ENCODE measurements at regions of chr7 and their contacts with region 1.

Region 1: GRCh38 chr7:139254281-139254680 is 23.2 kb downstream of the UBN2 start:
- DNase-seq: no peak
- H3K4me3 ChIP-seq: no peak overlapping the region
- H3K27ac ChIP-seq: no peak overlapping the region
- H3K4me1 ChIP-seq: no peaks in the 10 kb centered on the region
- H3K27me3 ChIP-seq: no peaks in the 10 kb centered on the region
- CTCF ChIP-seq: no peak

Region 2: DNA sequence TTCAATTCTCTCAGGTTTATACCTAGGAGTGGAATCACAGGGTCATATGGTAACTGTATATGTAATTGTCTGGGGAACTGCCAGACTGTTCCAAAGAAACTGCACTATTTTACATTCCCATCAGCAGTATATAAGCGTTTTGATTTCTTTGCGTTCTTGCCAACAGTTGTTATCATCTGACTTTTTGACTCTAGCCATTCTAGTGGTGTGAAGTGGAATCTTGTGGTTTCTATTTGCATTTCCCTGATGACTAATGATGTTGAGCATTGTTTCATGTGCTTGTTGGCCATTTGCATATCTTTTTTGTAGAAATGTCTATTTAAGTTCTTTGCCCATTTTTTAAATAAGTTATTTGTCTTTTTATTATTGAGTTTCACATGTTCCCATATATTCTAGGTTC is 100.4 kb before region 1 on chr7:
- CTCF ChIA-PET with region 1: no interaction called
- dilution Hi-C with region 1: no loop called
- in situ Hi-C with region 1: no loop called
- intact Hi-C with region 1: no loop called
- DNase-seq: peak; percentile 41
- H3K4me3 ChIP-seq: no peak overlapping the region
- H3K27ac ChIP-seq: no peak overlapping the region
- H3K4me1 ChIP-seq: no peaks in the 10 kb centered on the region
- H3K27me3 ChIP-seq: no peaks in the 10 kb centered on the region
- CTCF ChIP-seq: no peak

Region 3: DNA sequence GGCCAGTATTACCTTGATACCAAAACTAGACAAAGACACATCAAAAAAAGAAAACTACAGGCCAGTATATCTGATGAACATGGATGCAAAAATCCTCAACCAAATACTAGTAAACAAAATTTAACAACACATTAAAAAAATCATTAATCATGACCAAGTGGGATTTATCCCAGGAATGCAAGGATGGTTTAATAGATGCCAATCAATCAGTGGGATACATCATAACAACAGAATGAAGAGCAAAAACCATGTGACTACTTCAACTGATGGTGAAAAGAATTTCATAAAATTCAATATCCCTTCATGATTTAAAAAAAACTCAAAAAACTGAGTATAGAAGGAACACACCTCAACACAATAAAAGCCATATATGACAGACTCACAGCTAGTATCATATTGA is 48.4 kb before region 1 on chr7:
- CTCF ChIA-PET with region 1: no interaction called
- dilution Hi-C with region 1: no loop called
- in situ Hi-C with region 1: no loop called
- intact Hi-C with region 1: loop called (anchors 2 kb)
- DNase-seq: no peak
- H3K4me3 ChIP-seq: no peak overlapping the region
- H3K27ac ChIP-seq: no peak overlapping the region
- H3K4me1 ChIP-seq: no peaks in the 10 kb centered on the region
- H3K27me3 ChIP-seq: no peaks in the 10 kb centered on the region
- CTCF ChIP-seq: no peak

Measured in mammary epithelial cell (primary cell).